Sigmoid colon (tissue), 7 donors: ENCODE measurements at regions of chr6 and their contacts with region 1.

Region 1: GRCh38 chr6:85642774-85643536 is at the start of gene SYNCRIP:
- DNase-seq: peak; percentile 100
- H3K4me3 ChIP-seq: peak within 1 kb of the TSS; percentile 80 to 99 (median 87)
- H3K27ac ChIP-seq: peak within 1 kb of the TSS; percentile 96 to 99 (median 98)
- H3K4me1 ChIP-seq: peaks cover 0 to 50% (median 39%) of the 10 kb centered on the region in 4 donors
- H3K27me3 ChIP-seq: no peaks in the 10 kb centered on the region
- CTCF ChIP-seq: no peak
- EP300 ChIP-seq: peak in 2 of 4 donors; percentile 38 to 60
- POLR2A ChIP-seq: peak; percentile 94 to 97
- total RNA-seq, gene SYNCRIP: 71.6 to 84.3 (median 77.5) TPM

Region 2: GRCh38 chr6:84882768-84883766 is 759.9 kb before region 1 on chr6:
- intact Hi-C with region 1: no loop called
- DNase-seq: no peak
- H3K4me3 ChIP-seq: no peak overlapping the region
- H3K27ac ChIP-seq: no peak overlapping the region
- H3K4me1 ChIP-seq: no peaks in the 10 kb centered on the region
- H3K27me3 ChIP-seq: no peaks in the 10 kb centered on the region
- CTCF ChIP-seq: no peak
- EP300 ChIP-seq: no peak
- POLR2A ChIP-seq: no peak

Region 3: GRCh38 chr6:85298553-85298952 is 344.4 kb before region 1 on chr6:
- intact Hi-C with region 1: no loop called
- DNase-seq: no peak
- H3K4me3 ChIP-seq: no peak overlapping the region
- H3K27ac ChIP-seq: no peak overlapping the region
- H3K4me1 ChIP-seq: no peaks in the 10 kb centered on the region
- H3K27me3 ChIP-seq: no peaks in the 10 kb centered on the region
- CTCF ChIP-seq: no peak
- EP300 ChIP-seq: no peak
- POLR2A ChIP-seq: no peak

Region 4: GRCh38 chr6:85593438-85594196 is 49.3 kb before region 1 on chr6 and contains the start of gene SNX14:
- intact Hi-C with region 1: loop called (anchors 1 kb)
- DNase-seq: peak; percentile 98
- H3K4me3 ChIP-seq: peak within 1 kb of the TSS; percentile 64 to 91 (median 76)
- H3K27ac ChIP-seq: peak within 1 kb of the TSS; percentile 92 to 98 (median 96)
- H3K4me1 ChIP-seq: peaks cover 0 to 28% (median 18%) of the 10 kb centered on the region in 4 donors
- H3K27me3 ChIP-seq: no peaks in the 10 kb centered on the region
- CTCF ChIP-seq: peak in 1 of 4 experiments; percentile 10
- EP300 ChIP-seq: peak in 1 of 4 donors; percentile 46
- POLR2A ChIP-seq: peak; percentile 24 to 50
- total RNA-seq, gene SNX14: 52.4 to 94.2 (median 83.5) TPM